ENCODE measurements at regions of chr13 and their contacts with region 1.

Region 1: DNA sequence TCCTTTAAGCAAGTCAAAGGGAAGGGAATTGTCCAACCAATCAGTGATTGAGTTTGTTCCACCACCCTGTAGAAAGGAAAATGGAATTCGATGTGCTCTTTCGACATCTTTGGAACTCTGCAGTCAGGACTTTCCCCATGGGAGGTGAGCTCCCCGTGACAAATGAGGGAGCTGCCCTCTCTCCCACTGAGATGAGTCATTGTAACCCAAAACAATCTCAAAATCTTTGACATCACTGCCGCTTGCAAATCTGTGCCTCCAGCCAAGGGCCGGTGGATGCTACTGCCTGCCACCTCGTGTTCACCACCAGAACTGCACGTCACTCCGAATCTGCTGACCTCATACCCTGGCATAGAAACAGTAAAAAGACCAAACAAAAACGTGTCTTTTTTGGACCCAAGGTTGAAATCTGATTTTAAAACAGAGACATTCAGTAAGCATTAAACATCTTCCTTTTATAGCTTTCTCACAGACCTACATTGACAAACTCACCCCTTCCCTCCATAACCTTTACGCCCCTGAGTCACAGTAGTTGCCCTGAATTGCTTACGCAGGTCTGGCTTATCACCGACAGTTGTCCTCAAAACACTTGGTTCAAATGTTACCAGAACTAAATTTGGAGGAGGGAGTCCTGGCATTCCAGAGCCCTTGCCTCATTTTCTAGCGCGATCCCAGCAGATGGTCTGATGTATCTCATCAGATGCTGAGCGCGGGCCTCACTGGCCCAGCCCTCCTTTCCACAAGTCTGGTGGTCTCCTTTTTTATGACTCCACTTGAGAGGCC is 105.2 kb downstream of the COL4A2 start:
- DNase-seq: peak; percentile 75
- H3K4me3 ChIP-seq: no peak overlapping the region
- H3K27ac ChIP-seq: peak overlapping the region; percentile 75 to 80
- H3K4me1 ChIP-seq: no peaks in the 10 kb centered on the region
- H3K27me3 ChIP-seq: no peaks in the 10 kb centered on the region
- CTCF ChIP-seq: peak; percentile 83 to 92 (median 89)
- POLR2A ChIP-seq: peak; percentile 19

Region 2: GRCh38 chr13:110233181-110233950 is 179.0 kb before region 1 on chr13:
- intact Hi-C with region 1: loop called (anchors 5 kb)
- DNase-seq: no peak
- H3K4me3 ChIP-seq: no peak overlapping the region
- H3K27ac ChIP-seq: peak overlapping the region; percentile 64 to 70
- H3K4me1 ChIP-seq: no peaks in the 10 kb centered on the region
- H3K27me3 ChIP-seq: no peaks in the 10 kb centered on the region
- CTCF ChIP-seq: no peak
- POLR2A ChIP-seq: no peak

Region 3: DNA sequence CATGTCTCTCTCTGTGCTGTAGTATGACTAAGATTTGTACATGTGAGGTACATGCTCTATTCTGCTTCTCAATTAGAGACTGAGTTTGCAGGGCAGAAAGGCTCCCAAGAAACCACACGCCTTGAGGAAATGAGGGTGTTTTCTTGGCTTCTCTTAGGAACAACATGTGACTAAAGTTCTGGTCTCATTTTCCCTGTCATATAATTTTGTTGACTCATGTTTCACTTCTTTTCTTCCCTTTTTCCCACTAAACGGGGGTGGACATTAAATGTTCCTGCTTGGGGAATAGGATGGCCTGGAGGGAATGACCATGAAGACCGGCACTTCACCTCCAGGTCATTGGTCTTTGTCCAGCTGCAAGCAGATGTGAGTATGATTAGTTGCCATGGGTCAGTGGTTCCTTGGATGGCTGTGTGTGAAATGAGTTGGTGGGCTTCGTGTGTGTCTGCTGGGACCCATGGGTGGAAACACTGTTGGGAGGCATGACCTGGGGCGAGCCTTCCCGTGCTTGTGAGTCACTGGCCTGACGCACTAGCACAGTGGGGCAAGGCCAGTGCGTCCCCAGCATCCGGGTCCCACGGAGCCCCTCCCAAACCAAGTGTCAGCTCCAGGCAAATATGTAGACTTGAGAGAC is 161.9 kb before region 1 on chr13:
- intact Hi-C with region 1: loop called (anchors 5 kb)
- DNase-seq: no peak
- H3K4me3 ChIP-seq: no peak overlapping the region
- H3K27ac ChIP-seq: peak overlapping the region; percentile 62 to 65
- H3K4me1 ChIP-seq: no peaks in the 10 kb centered on the region
- H3K27me3 ChIP-seq: no peaks in the 10 kb centered on the region
- CTCF ChIP-seq: no peak
- POLR2A ChIP-seq: no peak

Region 4: GRCh38 chr13:110306960-110307746 is 105.2 kb before region 1 on chr13 and contains the starts of genes COL4A1 and COL4A2:
- intact Hi-C with region 1: loop called (anchors 5 kb)
- DNase-seq: peak; percentile 31
- H3K4me3 ChIP-seq: peak within 1 kb of the TSS; percentile 49 to 51
- H3K27ac ChIP-seq: peak within 1 kb of the TSS; percentile 86 to 91
- H3K4me1 ChIP-seq: no peaks in the 10 kb centered on the region
- H3K27me3 ChIP-seq: no peaks in the 10 kb centered on the region
- CTCF ChIP-seq: no peak
- POLR2A ChIP-seq: peak; percentile 64
- total RNA-seq, gene COL4A1: 37.3 to 132 TPM
- total RNA-seq, gene COL4A2: 82.8 to 193 TPM

Region 5: DNA sequence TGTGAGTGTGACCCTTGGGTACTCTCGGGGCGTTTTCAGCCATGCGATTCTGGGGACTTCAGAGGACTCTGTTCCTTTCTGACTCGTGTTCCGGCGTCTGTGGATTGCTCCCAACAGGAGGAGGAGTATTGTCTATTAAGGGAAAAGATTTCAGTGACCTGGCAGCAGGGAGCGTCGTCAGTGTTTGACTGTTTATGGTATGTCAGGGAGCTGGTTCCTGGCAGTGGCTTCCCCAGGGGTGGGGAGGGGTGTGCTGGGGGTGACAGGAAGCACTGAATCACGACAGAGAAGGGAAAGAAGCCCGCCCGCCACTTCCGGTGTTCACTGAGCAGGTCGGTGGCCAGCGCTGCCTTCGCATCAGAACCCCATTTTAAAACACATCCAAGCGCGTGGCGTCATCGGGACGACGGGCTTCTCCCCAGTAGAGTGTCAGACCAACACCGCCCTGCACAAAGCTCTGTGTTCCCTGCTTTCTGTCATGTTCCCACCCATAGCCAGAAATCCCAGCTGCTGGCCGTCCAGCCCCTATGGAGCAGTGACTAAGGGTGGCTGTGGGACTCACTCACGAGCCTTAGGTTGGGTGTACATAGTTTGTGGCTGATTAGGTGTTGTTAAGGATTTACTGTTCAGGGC is 71.4 kb before region 1 on chr13:
- intact Hi-C with region 1: loop called (anchors 5 kb)
- DNase-seq: peak; percentile 37
- H3K4me3 ChIP-seq: no peak overlapping the region
- H3K27ac ChIP-seq: peak overlapping the region; percentile 77 to 82
- H3K4me1 ChIP-seq: peaks cover 5% of the 10 kb centered on the region
- H3K27me3 ChIP-seq: no peaks in the 10 kb centered on the region
- CTCF ChIP-seq: no peak
- POLR2A ChIP-seq: no peak